BJ (cell line): ENCODE measurements at regions of chr11 and their contacts with region 1.

Region 1: GRCh38 chr11:130726234-130727037 is 189.8 kb downstream of the SNX19 start:
- DNase-seq: no peak
- H3K4me3 ChIP-seq: no peak overlapping the region
- H3K27me3 ChIP-seq: no peaks in the 10 kb centered on the region
- CTCF ChIP-seq: no peak

Region 2: GRCh38 chr11:130737866-130738431 is 11.5 kb after region 1 on chr11:
- CTCF ChIA-PET with region 1: interaction called, 10 read pairs
- POLR2A ChIA-PET with region 1: interaction called, 8 read pairs
- DNase-seq: peak; percentile 86
- H3K4me3 ChIP-seq: peak overlapping the region; percentile 10; the same call in 1 of the 2 replicates
- H3K27me3 ChIP-seq: no peaks in the 10 kb centered on the region
- CTCF ChIP-seq: no peak